CD4-positive, alpha-beta T cell (primary cell): ENCODE measurements at regions of chr1 and their contacts with region 1.

Region 1: GRCh38 chr1:159936273-159936904 is 9.0 kb downstream of the IGSF9 start:
- DNase-seq: peak; percentile 68 to 91 (median 83)
- ATAC-seq: peak; percentile 90
- H3K4me3 ChIP-seq: no peak overlapping the region
- H3K4me3 Mint-ChIP-seq: no peak overlapping the region
- H3K27ac ChIP-seq: no peak overlapping the region
- H3K27ac Mint-ChIP-seq: no peak overlapping the region
- H3K4me1 ChIP-seq: peaks cover 21% of the 10 kb centered on the region
- H3K4me1 Mint-ChIP-seq: peaks cover 6% of the 10 kb centered on the region
- H3K27me3 ChIP-seq: no peaks in the 10 kb centered on the region
- H3K27me3 Mint-ChIP-seq: peaks cover 19% of the 10 kb centered on the region
- CTCF ChIP-seq: peak; percentile 98

Region 2: GRCh38 chr1:159854693-159855192 is 81.6 kb before region 1 on chr1:
- CTCF ChIA-PET with region 1: no interaction called
- POLR2A ChIA-PET with region 1: no interaction called
- intact Hi-C with region 1: loop called in 1 of 2 experiments (anchors 10 kb)
- DNase-seq: peak; percentile 55 to 87 (median 75)
- ATAC-seq: peak; percentile 96
- H3K4me3 ChIP-seq: peak overlapping the region; percentile 70
- H3K4me3 Mint-ChIP-seq: peak overlapping the region; percentile 95
- H3K27ac ChIP-seq: peak overlapping the region in 1 of 2 donors; percentile 46
- H3K27ac Mint-ChIP-seq: peak overlapping the region; percentile 88
- H3K4me1 ChIP-seq: peaks cover 12% of the 10 kb centered on the region
- H3K4me1 Mint-ChIP-seq: peaks cover 20% of the 10 kb centered on the region
- H3K27me3 ChIP-seq: no peaks in the 10 kb centered on the region
- H3K27me3 Mint-ChIP-seq: no peaks in the 10 kb centered on the region
- CTCF ChIP-seq: no peak

Region 3: DNA sequence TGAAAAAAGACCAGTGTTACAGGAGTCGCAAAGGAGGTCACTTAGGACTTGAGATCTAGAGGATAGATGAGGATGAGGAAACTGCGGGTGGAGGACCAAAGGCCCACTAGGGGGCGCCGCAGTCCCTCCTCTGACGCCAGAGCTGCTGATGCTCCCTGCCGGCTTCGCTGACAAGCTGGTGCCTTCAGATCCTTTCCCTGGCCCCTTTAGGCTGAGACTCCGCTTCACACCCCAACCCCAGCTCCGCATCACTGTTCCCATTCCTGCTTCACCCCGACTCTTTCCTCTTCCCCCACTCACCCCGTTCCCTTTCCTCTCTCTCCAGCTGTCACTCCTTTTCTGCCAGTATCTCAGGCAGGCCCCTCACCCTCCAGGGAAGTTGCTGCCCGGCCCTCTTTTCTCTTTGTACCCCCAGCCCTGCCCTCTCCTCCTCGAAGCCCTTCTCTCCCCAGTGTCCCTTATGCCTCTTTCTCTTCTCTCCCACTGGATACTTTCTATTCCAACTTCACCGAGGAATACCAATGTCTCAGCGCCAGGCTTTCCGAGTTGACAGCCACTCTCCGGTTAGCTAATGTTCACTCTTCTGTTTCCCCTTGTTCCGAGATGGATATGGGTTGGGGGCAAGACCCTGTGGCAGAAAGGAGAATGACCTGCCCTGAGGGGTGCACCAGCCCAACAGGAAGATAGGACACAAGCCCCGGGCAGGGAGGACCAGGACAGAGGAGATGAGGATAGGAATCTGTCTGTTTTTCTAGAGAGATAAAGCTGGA is 149.5 kb after region 1 on chr1:
- CTCF ChIA-PET with region 1: no interaction called
- POLR2A ChIA-PET with region 1: no interaction called
- intact Hi-C with region 1: loop called (anchors 2 to 5 kb)
- DNase-seq: peak; percentile 66 to 87 (median 73)
- ATAC-seq: peak; percentile 71
- H3K4me3 ChIP-seq: no peak overlapping the region
- H3K4me3 Mint-ChIP-seq: peak overlapping the region; percentile 58
- H3K27ac ChIP-seq: no peak overlapping the region
- H3K27ac Mint-ChIP-seq: peak overlapping the region; percentile 47
- H3K4me1 ChIP-seq: peaks cover 15% of the 10 kb centered on the region
- H3K4me1 Mint-ChIP-seq: peaks cover 22% of the 10 kb centered on the region
- H3K27me3 ChIP-seq: peaks cover 22 to 24% of the 10 kb centered on the region in 2 experiments
- H3K27me3 Mint-ChIP-seq: peaks cover 24% of the 10 kb centered on the region
- CTCF ChIP-seq: peak; percentile 82

Region 4: GRCh38 chr1:160376525-160377131 is 440.2 kb after region 1 on chr1:
- CTCF ChIA-PET with region 1: no interaction called
- POLR2A ChIA-PET with region 1: no interaction called
- intact Hi-C with region 1: loop called in 1 of 2 experiments (anchors 5 kb)
- DNase-seq: peak in 4 of 14 experiments; percentile 37 to 74 (median 69)
- ATAC-seq: peak; percentile 80
- H3K4me3 ChIP-seq: no peak overlapping the region
- H3K4me3 Mint-ChIP-seq: no peak overlapping the region
- H3K27ac ChIP-seq: no peak overlapping the region
- H3K27ac Mint-ChIP-seq: no peak overlapping the region
- H3K4me1 ChIP-seq: peaks cover 12% of the 10 kb centered on the region
- H3K4me1 Mint-ChIP-seq: peaks cover 13% of the 10 kb centered on the region
- H3K27me3 ChIP-seq: no peaks in the 10 kb centered on the region
- H3K27me3 Mint-ChIP-seq: no peaks in the 10 kb centered on the region
- CTCF ChIP-seq: peak; percentile 87

Region 5: GRCh38 chr1:161399257-161399998 is 1463.0 kb after region 1 on chr1:
- CTCF ChIA-PET with region 1: no interaction called
- POLR2A ChIA-PET with region 1: no interaction called
- intact Hi-C with region 1: loop called in 1 of 2 experiments (anchors 10 kb)
- DNase-seq: peak; percentile 88 to 97 (median 93)
- ATAC-seq: peak; percentile 85
- H3K4me3 ChIP-seq: peak overlapping the region; percentile 87
- H3K4me3 Mint-ChIP-seq: peak overlapping the region; percentile 97
- H3K27ac ChIP-seq: peak overlapping the region; percentile 95 to 98
- H3K27ac Mint-ChIP-seq: peak overlapping the region; percentile 99
- H3K4me1 ChIP-seq: peaks cover 25% of the 10 kb centered on the region
- H3K4me1 Mint-ChIP-seq: peaks cover 23% of the 10 kb centered on the region
- H3K27me3 ChIP-seq: no peaks in the 10 kb centered on the region
- H3K27me3 Mint-ChIP-seq: peaks cover 29% of the 10 kb centered on the region
- CTCF ChIP-seq: peak; percentile 79